Naive thymus-derived CD4-positive, alpha-beta T cell (primary cell): ENCODE measurements at regions of chr7 and their contacts with region 1.

Region 1: DNA sequence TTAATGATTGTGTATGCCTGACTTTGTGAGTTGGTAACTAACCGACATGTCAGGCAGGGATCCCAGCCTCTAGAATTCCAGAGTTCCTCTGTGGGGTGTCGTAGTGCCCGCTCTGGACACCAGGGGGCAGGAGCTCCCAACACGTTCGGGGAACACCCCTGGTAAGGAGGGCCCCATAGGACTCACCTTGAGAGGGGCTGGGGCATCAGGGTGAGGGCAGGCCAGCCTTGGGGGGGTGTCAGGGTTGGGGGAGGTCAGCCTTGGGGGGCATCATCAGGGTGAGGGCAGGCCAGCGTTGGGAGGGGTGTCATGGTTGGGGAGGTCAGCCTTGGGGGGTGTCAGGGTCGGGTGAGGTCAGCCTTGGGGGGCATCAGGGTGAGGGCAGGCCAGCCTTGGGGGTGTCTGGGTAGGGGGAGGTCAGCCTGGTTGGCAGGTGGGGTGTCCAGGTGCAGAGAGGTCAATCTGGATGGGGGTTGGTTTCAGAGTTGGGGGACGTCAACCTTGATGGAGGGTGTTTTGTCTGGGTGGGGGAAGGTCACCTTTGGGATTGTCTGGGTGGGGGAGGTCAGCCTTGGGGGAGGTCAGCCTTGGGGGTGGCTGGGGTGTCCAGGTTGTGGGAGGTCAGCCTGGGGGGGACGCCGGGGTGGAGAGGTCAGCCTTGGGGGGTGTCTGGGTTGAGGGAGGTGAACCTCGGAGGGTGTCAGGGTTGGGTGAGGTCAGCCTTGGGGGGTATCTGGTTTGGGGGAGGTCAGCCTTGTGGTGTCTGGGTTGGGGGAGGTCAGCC is 45.6 kb upstream of the SUN1 start:
- DNase-seq: peak; percentile 44 to 77 (median 63)
- ATAC-seq: peak; percentile 91
- H3K4me3 ChIP-seq: no peak overlapping the region
- H3K4me3 Mint-ChIP-seq: no peak overlapping the region
- H3K27ac ChIP-seq: no peak overlapping the region
- H3K27ac Mint-ChIP-seq: peak overlapping the region in 1 of 9 donors; percentile 15
- H3K4me1 ChIP-seq: no peaks in the 10 kb centered on the region
- H3K4me1 Mint-ChIP-seq: peaks cover 0 to 2% (median 0%) of the 10 kb centered on the region in 7 donors
- H3K27me3 ChIP-seq: no peaks in the 10 kb centered on the region
- H3K27me3 Mint-ChIP-seq: no peaks in the 10 kb centered on the region

Region 2: DNA sequence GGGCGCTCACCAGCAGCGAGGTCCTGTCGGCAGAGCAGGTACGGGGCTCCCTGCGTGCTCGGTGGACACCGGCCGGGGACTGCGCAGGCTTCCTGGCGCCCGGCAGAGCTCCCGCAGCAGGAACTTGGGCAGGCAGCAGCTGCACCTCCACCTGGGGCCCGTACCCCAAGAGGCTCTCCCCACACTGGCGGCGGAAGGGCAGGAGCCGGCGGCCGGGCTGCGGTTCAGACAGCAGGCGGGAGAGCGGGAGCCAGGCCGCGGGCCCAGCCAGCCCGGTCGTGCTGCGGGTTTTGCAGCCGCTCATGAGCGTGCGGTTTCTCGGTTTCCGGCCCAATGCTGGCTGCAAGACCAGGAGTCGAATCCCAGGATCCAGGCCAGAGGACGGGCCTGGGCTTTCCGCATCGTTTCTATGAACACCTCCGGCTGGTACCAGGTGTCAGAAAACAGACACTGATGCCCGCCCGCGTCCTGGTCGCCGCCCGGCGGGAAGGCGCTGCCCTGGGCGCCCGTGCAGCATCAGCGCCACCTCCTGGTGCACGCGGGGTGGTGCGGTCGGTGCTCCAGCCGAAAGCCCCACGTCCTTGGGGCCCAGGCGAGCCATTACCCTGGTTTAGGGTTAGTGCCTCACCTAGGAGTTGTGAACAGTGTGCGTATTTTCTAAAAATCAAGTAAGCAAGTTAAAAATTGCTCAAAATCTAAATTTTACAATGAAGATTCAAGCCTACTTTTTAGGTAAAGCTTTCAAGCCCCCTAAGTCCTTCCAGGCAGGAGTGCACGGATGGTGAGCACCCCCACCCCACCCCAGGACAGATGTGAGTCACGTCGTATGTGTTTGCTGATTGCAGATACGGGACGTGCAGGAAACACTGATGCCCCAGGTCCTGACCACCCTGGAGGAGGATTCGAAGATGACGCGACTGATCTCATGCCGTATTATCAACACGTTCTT is 12.2 kb before region 1 on chr7:
- CTCF ChIA-PET with region 1: no interaction called
- POLR2A ChIA-PET with region 1: no interaction called
- intact Hi-C with region 1: no loop called
- DNase-seq: peak; percentile 38 to 79 (median 62)
- ATAC-seq: peak; percentile 84
- H3K4me3 ChIP-seq: no peak overlapping the region
- H3K4me3 Mint-ChIP-seq: no peak overlapping the region
- H3K27ac ChIP-seq: no peak overlapping the region
- H3K27ac Mint-ChIP-seq: no peak overlapping the region
- H3K4me1 ChIP-seq: no peaks in the 10 kb centered on the region
- H3K4me1 Mint-ChIP-seq: no peaks in the 10 kb centered on the region
- H3K27me3 ChIP-seq: no peaks in the 10 kb centered on the region
- H3K27me3 Mint-ChIP-seq: no peaks in the 10 kb centered on the region

Region 3: GRCh38 chr7:831596-832166 is 45.0 kb after region 1 on chr7:
- CTCF ChIA-PET with region 1: interaction called, 5 read pairs
- POLR2A ChIA-PET with region 1: interaction called, 4 read pairs
- intact Hi-C with region 1: loop called (anchors 1 kb)
- DNase-seq: peak in 3 of 9 donors; percentile 19 to 49 (median 26)
- ATAC-seq: peak; percentile 13
- H3K4me3 ChIP-seq: peak overlapping the region; percentile 12
- H3K4me3 Mint-ChIP-seq: peak overlapping the region; percentile 64 to 89 (median 84)
- H3K27ac ChIP-seq: peak overlapping the region; percentile 83
- H3K27ac Mint-ChIP-seq: peak overlapping the region; percentile 86 to 98 (median 94)
- H3K4me1 ChIP-seq: peaks cover 23 to 36% of the 10 kb centered on the region in 2 donors
- H3K4me1 Mint-ChIP-seq: peaks cover 38 to 67% (median 57%) of the 10 kb centered on the region in 7 donors
- H3K27me3 ChIP-seq: no peaks in the 10 kb centered on the region
- H3K27me3 Mint-ChIP-seq: no peaks in the 10 kb centered on the region

Region 4: DNA sequence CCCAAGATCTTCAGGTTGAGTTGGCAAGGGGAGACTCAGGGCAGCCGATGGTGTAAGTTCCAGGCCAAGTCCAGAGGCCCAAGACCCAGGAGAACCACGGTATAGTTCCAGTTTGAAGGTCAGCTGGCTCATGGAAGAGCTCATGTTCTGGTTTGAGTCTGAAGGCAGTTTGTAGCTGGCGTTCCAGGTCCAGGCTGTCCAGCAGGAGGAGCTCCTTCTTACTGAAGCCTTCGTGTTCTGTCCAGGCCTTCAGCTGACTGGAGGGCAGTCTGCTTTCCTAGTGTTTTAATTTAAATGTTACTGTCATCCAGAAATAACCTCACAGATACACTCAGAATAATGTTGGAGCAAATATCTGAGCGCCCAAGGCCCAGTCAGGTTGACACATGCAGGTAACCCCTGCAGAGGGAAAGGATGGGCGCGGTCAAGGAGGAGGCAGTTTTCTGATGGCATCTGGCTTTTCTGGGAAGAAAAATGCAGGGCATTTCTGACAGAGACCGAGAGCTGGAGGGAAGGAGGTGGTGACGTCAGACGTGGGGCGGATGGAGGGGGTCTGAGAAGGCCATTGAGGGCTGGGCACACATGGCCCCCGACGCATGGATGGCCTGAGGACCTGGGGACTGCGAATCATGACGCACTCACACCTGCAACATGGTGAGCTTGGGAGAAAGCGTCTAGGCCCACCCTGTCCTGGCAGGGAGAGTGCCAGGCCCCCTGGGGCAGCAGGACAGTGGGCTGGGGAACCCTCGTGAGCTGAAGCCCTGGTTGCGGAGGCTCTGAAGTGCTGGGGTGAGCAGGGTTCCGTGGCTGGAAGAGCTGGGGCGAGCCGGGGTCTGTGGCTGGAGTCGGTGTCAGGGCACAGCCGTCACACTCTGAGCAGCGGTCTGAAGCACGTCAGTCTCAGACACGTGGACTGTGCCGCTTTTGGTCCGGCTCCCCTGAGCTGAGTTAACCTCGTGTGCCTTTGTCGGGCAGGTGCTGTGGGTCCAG is 50.0 kb after region 1 on chr7:
- CTCF ChIA-PET with region 1: interaction called, 5 read pairs
- POLR2A ChIA-PET with region 1: interaction called, 4 read pairs
- intact Hi-C with region 1: loop called (anchors 1 kb)
- DNase-seq: no peak
- ATAC-seq: no peak
- H3K4me3 ChIP-seq: no peak overlapping the region
- H3K4me3 Mint-ChIP-seq: peak overlapping the region in 1 of 10 donors; percentile 72
- H3K27ac ChIP-seq: no peak overlapping the region
- H3K27ac Mint-ChIP-seq: peak overlapping the region in 8 of 9 donors; percentile 15 to 97 (median 70)
- H3K4me1 ChIP-seq: peaks cover 12 to 20% of the 10 kb centered on the region in 2 donors
- H3K4me1 Mint-ChIP-seq: peaks cover 18 to 39% (median 31%) of the 10 kb centered on the region in 7 donors
- H3K27me3 ChIP-seq: no peaks in the 10 kb centered on the region
- H3K27me3 Mint-ChIP-seq: no peaks in the 10 kb centered on the region

Region 5: DNA sequence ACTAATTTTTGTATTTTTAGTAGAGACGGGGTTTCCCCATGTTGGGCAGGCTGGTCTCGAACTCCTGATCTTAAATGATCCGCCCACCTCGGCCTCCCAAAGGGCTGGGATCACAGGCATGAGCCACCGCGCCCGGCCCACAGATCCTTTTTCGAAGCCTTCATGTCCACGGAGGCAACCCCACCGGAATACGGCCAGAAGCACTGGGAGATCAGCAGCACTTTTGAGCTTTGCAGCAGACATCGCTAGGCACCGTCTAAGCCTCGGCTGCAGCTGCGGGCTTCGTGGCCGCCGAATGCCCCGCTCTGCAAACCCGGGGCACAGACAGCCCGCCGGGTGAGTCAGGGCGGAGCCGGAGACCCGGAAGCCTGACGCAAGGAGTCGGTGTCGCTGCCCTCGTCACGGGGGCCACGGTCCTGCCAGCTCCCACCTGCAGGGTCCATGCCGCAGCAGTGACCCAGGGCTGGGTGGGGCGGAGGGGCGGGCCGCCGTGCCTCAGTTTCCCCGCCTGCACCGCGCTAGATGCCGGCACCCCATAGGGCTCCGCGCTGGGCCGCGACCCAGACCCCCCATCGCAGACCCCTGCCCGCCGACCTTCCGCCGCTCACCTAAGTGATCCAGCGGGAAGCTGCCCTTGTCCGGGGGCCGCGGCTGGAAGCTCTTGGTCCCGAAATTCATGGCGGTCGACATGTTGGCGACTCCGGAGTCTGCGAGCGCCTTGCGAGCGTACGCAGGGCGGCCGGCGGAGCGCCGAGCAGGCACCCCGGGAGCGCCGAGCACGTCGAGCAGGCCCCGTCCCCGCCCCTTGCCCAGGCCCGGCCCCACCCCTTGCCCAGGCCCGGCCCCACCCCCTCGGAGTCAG is 188.4 kb after region 1 on chr7 and contains the start of gene COX19:
- CTCF ChIA-PET with region 1: no interaction called
- POLR2A ChIA-PET with region 1: no interaction called
- intact Hi-C with region 1: no loop called
- DNase-seq: peak; percentile 82 to 92 (median 87)
- ATAC-seq: peak; percentile 98
- H3K4me3 ChIP-seq: peak within 1 kb of the TSS; percentile 95
- H3K4me3 Mint-ChIP-seq: peak within 1 kb of the TSS; percentile 86 to 96 (median 92)
- H3K27ac ChIP-seq: peak within 1 kb of the TSS; percentile 98
- H3K27ac Mint-ChIP-seq: peak within 1 kb of the TSS; percentile 59 to 94 (median 89)
- H3K4me1 ChIP-seq: peaks cover 14 to 20% of the 10 kb centered on the region in 2 donors
- H3K4me1 Mint-ChIP-seq: peaks cover 12 to 36% (median 25%) of the 10 kb centered on the region in 7 donors
- H3K27me3 ChIP-seq: no peaks in the 10 kb centered on the region
- H3K27me3 Mint-ChIP-seq: no peaks in the 10 kb centered on the region
- total RNA-seq, gene COX19: 18.3 to 48.2 (median 46.1) TPM